ENCODE measurements at regions of chr2 and their contacts with region 1.

Region 1: GRCh38 chr2:85420536-85421259 is 2.2 kb downstream of the SH2D6 start:
- DNase-seq: peak; percentile 95

Region 2: DNA sequence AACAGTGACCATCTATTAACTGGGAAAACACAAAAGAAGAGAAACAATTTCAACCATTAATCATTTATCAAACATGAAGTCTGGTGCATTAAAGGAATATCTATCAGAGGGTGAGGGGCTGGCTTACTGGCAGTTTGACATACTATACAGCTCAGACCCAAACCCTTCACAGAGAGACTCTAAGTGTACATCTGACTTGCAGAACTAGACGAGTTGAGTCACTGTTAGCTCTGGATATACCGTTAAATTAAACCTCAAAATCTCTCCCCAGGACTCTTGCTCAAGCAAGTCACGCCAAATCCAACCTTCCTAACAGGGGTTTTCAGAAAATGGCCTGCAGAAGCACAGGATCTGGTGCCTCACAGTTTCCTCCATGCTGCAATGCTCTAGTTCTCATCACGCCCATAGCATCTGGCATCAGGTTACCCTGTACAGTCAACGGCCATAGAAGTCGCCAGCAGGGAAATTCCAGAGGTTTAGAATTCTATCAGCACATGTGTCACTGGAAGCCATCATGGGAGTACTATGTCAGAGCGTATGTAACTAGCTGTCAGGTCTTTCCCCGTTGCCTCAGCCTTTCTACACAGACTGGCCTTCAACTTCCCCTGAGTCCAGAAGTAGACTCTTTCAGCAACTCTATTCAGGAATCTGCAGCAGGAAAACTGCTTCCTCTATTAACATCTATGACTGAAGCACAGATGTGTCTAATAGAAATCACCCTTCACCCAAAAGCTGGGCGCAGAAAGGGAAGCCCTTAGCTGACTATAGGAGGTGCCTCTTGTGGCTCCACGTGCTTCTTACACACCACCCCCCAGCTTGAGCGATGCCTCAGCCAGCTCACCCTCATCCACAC is 102.2 kb before region 1 on chr2:
- intact Hi-C with region 1: no loop called
- DNase-seq: no peak

Region 3: DNA sequence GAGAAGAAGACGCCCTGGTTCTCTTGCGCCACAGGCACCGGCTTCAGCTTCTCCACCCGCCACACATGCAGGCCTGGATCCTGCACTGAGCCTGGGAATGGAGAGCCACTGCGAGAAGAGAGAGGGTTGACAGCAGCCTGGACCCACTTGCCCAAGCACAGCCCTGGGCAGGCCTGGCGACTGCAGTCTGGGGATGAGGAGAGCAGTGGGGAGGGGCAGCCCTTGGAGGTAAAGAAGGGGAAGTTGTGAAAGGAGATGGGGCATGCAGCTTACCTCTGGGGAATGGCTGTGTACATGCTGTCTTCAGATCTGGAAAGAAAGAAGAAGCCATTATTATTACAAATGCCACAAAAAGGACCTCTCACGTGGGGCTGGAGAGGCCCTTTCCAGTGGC is 18.9 kb before region 1 on chr2:
- intact Hi-C with region 1: no loop called
- DNase-seq: no peak

Region 4: GRCh38 chr2:85551698-85552678 is 131.3 kb after region 1 on chr2:
- intact Hi-C with region 1: loop called (anchors 1 kb)
- DNase-seq: peak; percentile 88